Aorta (tissue), 5 donors: ENCODE measurements at regions of chr3 and their contacts with region 1.

Region 1: DNA sequence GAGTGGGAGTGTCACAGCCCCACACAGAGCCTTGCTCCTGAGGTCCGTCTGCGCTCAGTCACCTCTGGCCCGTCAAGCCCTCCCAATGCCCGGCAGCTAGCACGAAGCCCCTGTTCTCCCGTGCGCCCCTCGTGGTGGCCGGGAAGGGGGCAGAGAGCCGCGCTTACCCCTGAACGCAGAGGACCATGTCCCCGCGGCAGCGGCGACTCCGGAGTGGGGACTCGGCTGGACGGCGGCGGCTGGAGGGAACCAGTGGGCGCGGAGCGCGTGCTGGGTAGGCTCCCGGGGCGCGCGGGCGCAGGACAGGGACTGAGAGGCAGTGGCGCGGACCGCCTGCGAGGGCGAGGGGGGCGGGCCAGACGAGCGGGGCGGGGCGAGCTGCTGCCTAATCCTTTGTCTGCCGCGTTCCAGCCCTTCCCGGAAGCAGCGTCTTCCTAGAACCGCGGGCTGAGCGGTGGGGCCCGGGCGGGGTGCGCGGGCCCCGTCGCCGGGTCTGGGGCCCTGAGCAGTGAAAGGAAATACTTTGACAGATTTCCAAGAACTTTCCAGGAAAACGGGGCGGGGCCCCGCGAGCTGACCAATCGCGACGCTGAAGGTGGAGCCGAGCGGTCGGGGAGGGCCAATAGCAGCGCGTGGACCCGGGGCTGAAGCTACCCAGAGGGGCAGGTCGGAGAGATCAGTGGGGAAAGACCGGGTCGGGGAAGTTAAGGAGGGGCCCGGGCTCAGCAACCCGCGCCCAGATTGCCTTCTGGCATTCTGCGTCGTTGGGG is at the start of gene CISH:
- DNase-seq: peak; percentile 97 to 98
- ATAC-seq: peak; percentile 90
- H3K4me3 ChIP-seq: peak within 1 kb of the TSS; percentile 7 to 61
- H3K27ac ChIP-seq: peak within 1 kb of the TSS in 1 of 2 donors; percentile 2
- H3K4me1 ChIP-seq: no peaks in the 10 kb centered on the region
- H3K27me3 ChIP-seq: no peaks in the 10 kb centered on the region
- total RNA-seq, gene CISH: 8.3 to 10.1 TPM

Region 2: GRCh38 chr3:50350527-50351322 is 260.9 kb before region 1 on chr3 and contains the starts of genes CYB561D2 and NPRL2:
- intact Hi-C with region 1: loop called in 1 of 2 experiments (anchors 5 kb)
- DNase-seq: peak; percentile 99
- ATAC-seq: peak; percentile 95
- H3K4me3 ChIP-seq: peak within 1 kb of the TSS; percentile 15 to 51
- H3K27ac ChIP-seq: peak within 1 kb of the TSS in 1 of 2 donors; percentile 75
- H3K4me1 ChIP-seq: no peaks in the 10 kb centered on the region
- H3K27me3 ChIP-seq: no peaks in the 10 kb centered on the region
- total RNA-seq, gene CYB561D2: 7.9 to 12.2 TPM
- total RNA-seq, gene NPRL2: 11.9 to 21.4 TPM

Region 3: DNA sequence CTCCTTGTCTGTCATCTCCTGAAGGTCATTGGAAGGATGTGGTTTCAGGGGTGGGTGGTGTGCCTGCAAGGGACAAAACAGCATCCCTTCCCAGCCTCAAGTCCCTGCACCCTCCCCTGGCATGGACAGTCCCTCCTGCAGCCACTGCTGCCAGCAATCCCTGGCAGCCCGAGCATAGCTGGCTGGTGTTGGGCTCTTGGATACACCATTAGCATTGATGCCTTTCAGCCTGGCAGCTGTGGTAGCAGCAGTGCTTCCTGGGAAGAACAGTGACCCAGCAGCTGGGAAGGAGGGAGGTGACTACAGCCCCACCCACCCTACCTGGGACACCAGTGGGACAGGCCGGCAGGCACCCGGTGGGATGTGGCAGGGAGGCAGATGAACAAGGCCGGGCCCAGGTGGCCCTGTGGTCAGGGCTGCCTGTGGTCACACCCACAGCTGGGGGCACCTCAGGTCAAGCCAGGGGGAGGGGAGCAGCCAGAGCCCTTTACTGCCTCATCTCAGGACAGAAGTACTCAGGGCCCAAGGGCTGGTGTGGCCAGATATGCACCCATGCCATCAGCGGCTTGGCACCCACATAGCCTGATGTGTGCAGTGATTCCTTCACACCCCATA is 219.4 kb before region 1 on chr3:
- intact Hi-C with region 1: no loop called
- DNase-seq: no peak
- ATAC-seq: no peak
- H3K4me3 ChIP-seq: no peak overlapping the region
- H3K27ac ChIP-seq: no peak overlapping the region
- H3K4me1 ChIP-seq: no peaks in the 10 kb centered on the region
- H3K27me3 ChIP-seq: no peaks in the 10 kb centered on the region

Region 4: DNA sequence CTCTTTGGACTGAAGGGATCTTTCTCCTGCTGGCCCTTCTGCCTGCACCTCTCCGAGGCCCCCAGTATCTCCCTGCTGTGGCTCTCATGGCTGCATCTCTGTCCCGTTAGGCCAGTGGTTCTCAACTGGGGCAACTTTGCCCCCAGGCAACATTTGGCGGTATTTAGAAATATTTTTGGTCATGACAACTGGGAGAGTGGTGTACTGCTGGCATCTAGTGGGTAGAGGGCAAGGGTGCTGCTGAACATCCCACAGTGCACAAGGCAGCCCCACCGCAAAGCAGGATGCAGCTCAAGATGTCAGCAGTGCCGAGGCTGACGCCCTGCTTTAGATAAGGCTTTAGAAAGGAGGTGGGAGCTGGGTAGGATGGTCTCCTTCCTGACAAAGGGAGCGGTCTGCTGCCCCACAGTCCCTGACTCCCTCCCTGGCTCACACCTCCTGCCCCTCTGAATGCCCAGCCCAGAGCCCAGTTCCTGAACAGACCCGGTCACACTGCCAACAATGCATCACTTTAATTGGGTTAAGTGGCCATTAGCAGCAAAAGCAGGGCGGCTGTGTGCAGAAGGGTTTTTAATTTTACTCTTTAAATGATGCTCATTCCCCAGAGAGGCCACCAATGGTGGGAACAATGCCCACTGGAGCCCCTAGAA is 183.5 kb before region 1 on chr3:
- intact Hi-C with region 1: no loop called
- DNase-seq: no peak
- ATAC-seq: no peak
- H3K4me3 ChIP-seq: no peak overlapping the region
- H3K27ac ChIP-seq: no peak overlapping the region
- H3K4me1 ChIP-seq: no peaks in the 10 kb centered on the region
- H3K27me3 ChIP-seq: no peaks in the 10 kb centered on the region

Region 5: GRCh38 chr3:50519471-50520089 is 92.1 kb before region 1 on chr3:
- intact Hi-C with region 1: loop called in 1 of 2 experiments (anchors 5 kb)
- DNase-seq: peak; percentile 65 to 85
- ATAC-seq: peak; percentile 63
- H3K4me3 ChIP-seq: no peak overlapping the region
- H3K27ac ChIP-seq: no peak overlapping the region
- H3K4me1 ChIP-seq: no peaks in the 10 kb centered on the region
- H3K27me3 ChIP-seq: no peaks in the 10 kb centered on the region

Region 6: GRCh38 chr3:50568947-50569749 is 42.5 kb before region 1 on chr3 and contains the start of gene HEMK1:
- intact Hi-C with region 1: loop called (anchors 1 kb)
- DNase-seq: peak; percentile 99
- ATAC-seq: peak; percentile 95
- H3K4me3 ChIP-seq: peak within 1 kb of the TSS; percentile 56 to 62
- H3K27ac ChIP-seq: peak within 1 kb of the TSS in 1 of 2 donors; percentile 72
- H3K4me1 ChIP-seq: no peaks in the 10 kb centered on the region
- H3K27me3 ChIP-seq: no peaks in the 10 kb centered on the region
- total RNA-seq, gene HEMK1: 12.0 to 21.3 TPM

Region 7: GRCh38 chr3:50600841-50601591 is 10.6 kb before region 1 on chr3:
- intact Hi-C with region 1: loop called in 1 of 2 experiments (anchors 1 kb)
- DNase-seq: peak; percentile 97
- ATAC-seq: peak; percentile 91
- H3K4me3 ChIP-seq: no peak overlapping the region
- H3K27ac ChIP-seq: peak overlapping the region; percentile 49 to 99
- H3K4me1 ChIP-seq: peaks cover 0 to 4% of the 10 kb centered on the region in 2 donors
- H3K27me3 ChIP-seq: no peaks in the 10 kb centered on the region

Region 8: GRCh38 chr3:51371943-51372557 is 760.4 kb after region 1 on chr3:
- intact Hi-C with region 1: loop called (anchors 5 kb)
- DNase-seq: peak; percentile 56 to 64
- ATAC-seq: no peak
- H3K4me3 ChIP-seq: no peak overlapping the region
- H3K27ac ChIP-seq: no peak overlapping the region
- H3K4me1 ChIP-seq: no peaks in the 10 kb centered on the region
- H3K27me3 ChIP-seq: no peaks in the 10 kb centered on the region

Region 9: DNA sequence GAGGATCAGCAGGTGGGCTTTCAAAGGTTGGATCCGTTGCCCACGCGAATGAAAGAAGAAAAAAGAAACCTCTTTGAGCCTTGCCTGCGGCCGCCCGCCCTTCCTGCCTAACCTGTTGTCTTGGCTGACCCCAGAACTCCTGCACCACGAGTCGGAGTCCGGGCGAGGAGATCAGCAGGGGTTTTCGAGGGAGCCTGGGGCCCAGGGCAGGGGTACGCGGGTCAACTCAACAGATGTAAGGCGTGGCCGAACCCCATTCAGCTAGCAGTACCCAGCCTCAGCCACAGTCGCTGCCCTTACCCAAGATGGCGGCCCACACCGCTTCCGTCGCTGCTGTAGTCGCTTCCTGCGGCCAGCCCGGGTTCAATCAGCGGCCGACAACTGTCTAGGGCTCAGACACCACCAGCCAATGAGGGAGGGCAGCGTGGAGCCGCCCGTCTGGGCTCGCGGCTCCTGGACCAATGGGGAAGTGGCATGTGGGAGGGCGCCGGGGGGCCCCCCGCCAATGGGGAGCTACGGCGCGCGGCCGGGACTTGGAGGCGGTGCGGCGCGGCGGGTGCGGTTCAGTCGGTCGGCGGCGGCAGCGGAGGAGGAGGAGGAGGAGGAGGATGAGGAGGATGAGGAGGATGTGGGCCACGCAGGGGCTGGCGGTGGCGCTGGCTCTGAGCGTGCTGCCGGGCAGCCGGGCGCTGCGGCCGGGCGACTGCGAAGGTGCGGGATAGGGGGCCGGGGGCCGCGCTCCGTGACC is 773.3 kb after region 1 on chr3 and contains the start of gene MANF:
- intact Hi-C with region 1: loop called (anchors 1 to 5 kb)
- DNase-seq: peak; percentile 99
- ATAC-seq: peak; percentile 98
- H3K4me3 ChIP-seq: peak within 1 kb of the TSS; percentile 43 to 72
- H3K27ac ChIP-seq: peak within 1 kb of the TSS; percentile 57 to 81
- H3K4me1 ChIP-seq: peaks cover 0 to 2% of the 10 kb centered on the region in 2 donors
- H3K27me3 ChIP-seq: no peaks in the 10 kb centered on the region
- total RNA-seq, gene MANF: 78.9 to 108 TPM

Region 10: DNA sequence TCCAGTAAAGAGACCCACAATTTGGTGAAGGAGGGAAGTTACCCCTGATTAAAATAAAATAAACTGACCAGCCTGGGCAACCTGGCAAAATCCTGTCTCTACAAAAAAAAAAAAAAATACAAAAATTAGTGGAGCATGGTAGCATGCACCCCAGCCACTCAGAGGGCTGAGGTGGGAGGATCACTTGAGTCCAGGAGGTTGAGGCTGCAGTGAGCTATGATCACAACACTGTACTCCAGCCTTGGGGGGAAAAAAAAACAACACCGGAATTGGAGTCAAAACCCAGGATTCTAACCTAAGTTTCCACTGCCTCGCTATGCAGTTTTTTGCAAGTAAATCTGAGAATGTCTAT is 865.7 kb after region 1 on chr3:
- intact Hi-C with region 1: no loop called
- DNase-seq: no peak
- ATAC-seq: no peak
- H3K4me3 ChIP-seq: no peak overlapping the region
- H3K27ac ChIP-seq: no peak overlapping the region
- H3K4me1 ChIP-seq: no peaks in the 10 kb centered on the region
- H3K27me3 ChIP-seq: no peaks in the 10 kb centered on the region